Right cardiac atrium (tissue), 5 donors: ENCODE measurements at regions of chr13 and their contacts with region 1.

Region 1: DNA sequence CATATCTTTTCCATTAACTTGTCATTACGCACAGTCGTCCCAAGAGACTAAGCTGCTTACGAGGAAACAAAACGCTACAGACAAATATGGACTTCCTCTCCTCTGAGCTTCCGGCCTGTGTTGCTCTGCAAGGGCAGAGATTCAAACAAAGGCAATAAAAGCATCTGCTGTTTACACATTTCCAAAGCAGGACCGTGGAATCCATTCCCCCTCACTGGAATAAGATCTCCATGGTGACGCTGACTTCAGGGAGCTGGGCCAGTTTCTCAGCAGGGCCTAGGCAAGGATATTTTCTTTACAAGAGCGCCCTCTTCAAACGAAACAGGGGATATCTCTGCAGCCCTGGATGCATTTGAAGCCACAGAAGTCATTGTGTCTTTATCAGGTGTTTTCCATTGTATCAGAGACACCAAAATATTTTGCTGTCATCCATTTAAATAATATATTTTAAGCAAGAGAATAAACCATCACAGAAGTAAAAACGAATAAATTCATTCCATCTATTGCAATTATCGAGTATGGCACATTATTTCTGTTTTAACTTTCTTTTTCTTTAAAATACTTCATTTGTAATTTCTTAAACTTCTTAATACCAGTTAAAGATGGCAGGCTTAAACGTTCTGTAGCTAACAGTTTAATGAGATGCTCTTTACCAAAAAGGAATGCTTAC is 177.5 kb downstream of the DCLK1 start:
- DNase-seq: peak; percentile 82 to 91 (median 87)
- ATAC-seq: peak; percentile 87 to 91
- H3K4me3 ChIP-seq: no peak overlapping the region
- H3K27ac ChIP-seq: no peak overlapping the region
- H3K4me1 ChIP-seq: no peaks in the 10 kb centered on the region
- H3K27me3 ChIP-seq: no peaks in the 10 kb centered on the region

Region 2: GRCh38 chr13:35684432-35684831 is 269.2 kb before region 1 on chr13:
- intact Hi-C with region 1: no loop called
- DNase-seq: no peak
- ATAC-seq: no peak
- H3K4me3 ChIP-seq: no peak overlapping the region
- H3K27ac ChIP-seq: no peak overlapping the region
- H3K4me1 ChIP-seq: no peaks in the 10 kb centered on the region
- H3K27me3 ChIP-seq: no peaks in the 10 kb centered on the region

Region 3: DNA sequence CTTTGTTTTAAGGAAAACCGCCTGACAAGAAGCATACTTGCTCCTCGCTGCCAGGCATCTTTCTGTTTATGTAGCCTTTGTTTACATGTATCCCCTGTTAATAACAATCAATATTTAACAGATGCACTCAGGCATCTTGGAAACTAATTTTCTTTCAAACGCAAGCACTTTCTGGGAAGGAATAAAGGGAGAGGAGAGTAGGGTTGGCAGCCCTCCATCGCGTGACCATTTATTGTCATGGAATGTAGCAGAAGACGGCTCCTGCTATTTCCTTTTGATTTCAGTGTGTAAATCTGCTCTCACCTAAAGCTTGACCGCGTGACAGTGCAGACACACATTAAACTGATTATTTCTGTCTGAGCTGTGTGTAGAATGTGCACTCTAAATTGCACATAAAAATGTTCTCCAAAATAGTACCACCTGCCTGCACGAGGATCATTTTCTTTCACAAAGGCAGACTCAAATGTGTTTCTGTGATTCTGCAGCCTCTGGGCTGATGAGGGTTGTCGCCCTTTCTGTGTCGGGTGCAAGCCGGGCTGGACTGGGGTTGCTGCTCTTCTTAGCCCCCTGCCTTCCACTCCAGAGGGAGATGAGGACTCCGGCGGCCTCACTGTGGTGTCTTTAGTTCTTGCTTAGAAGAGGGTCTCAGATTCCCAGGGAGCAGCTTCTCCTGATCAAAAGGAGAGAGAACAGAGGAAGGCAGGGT is 253.7 kb before region 1 on chr13:
- intact Hi-C with region 1: no loop called
- DNase-seq: peak in 2 of 3 donors; percentile 39 to 78
- ATAC-seq: no peak
- H3K4me3 ChIP-seq: no peak overlapping the region
- H3K27ac ChIP-seq: no peak overlapping the region
- H3K4me1 ChIP-seq: peaks cover 5% of the 10 kb centered on the region
- H3K27me3 ChIP-seq: no peaks in the 10 kb centered on the region

Region 4: DNA sequence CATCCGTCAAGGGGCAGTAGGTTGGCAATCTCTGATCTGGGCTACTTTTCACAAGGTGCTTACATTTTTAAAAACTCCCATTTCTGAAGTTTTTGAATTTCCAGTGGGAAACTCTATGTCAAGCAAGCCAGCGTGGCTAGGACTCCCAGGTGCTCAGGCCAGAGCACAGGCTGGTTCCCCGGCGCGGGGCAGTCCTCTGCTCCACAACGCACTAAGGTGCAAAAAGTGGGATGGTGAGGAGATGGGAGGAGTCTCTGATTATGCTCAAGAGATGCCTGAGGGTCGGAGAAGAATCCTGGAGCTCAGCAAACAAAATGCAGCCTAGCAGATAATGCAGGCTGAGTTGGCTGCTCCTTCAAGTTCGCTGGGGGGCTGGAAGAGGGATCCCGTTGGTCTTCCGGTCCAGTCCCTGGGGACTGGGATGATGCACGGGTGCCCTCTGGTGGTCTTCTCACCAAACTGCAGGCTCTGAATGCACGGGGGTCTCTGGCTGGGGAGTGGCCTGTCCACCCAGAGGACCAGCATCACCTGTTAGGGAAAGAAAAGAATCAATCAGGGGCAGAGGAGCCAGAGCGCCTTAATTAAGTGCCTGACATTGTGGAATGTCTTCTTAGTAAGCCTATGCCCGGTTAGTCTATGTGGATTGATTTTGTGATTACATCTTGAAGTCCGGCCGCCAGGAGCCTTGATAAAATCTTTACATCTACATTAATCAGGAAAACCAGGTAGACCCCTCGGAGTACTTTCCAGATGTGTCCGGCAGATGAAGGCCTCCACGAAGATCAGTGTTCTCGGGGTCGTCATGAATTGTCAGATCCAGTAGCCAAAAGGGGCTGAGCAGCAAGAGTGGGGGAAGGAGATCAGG is 232.8 kb before region 1 on chr13:
- intact Hi-C with region 1: loop called in 1 of 4 experiments (anchors 10 kb)
- DNase-seq: peak; percentile 44 to 69 (median 68)
- ATAC-seq: peak; percentile 19 to 27
- H3K4me3 ChIP-seq: peak overlapping the region; percentile 9
- H3K27ac ChIP-seq: peak overlapping the region; percentile 10
- H3K4me1 ChIP-seq: peaks cover 5% of the 10 kb centered on the region
- H3K27me3 ChIP-seq: no peaks in the 10 kb centered on the region

Region 5: GRCh38 chr13:35826622-35827254 is 126.9 kb before region 1 on chr13:
- intact Hi-C with region 1: loop called in 2 of 4 experiments (anchors 10 kb)
- DNase-seq: no peak
- ATAC-seq: no peak
- H3K4me3 ChIP-seq: no peak overlapping the region
- H3K27ac ChIP-seq: no peak overlapping the region
- H3K4me1 ChIP-seq: no peaks in the 10 kb centered on the region
- H3K27me3 ChIP-seq: no peaks in the 10 kb centered on the region

Region 6: GRCh38 chr13:35874704-35875103 is 79.0 kb before region 1 on chr13:
- intact Hi-C with region 1: loop called in 1 of 4 experiments (anchors 5 kb)
- DNase-seq: peak; percentile 54 to 86 (median 75)
- ATAC-seq: peak; percentile 78 to 86
- H3K4me3 ChIP-seq: no peak overlapping the region
- H3K27ac ChIP-seq: peak overlapping the region; percentile 30
- H3K4me1 ChIP-seq: peaks cover 5% of the 10 kb centered on the region
- H3K27me3 ChIP-seq: no peaks in the 10 kb centered on the region